BJ (cell line): ENCODE measurements at regions of chr3 and their contacts with region 1.

Region 1: GRCh38 chr3:39499651-39500240 is 32.3 kb downstream of the MOBP start:
- DNase-seq: no peak
- H3K4me3 ChIP-seq: no peak overlapping the region
- H3K27me3 ChIP-seq: peaks cover 22% of the 10 kb centered on the region
- CTCF ChIP-seq: no peak

Region 2: GRCh38 chr3:39267631-39268548 is 231.9 kb before region 1 on chr3:
- CTCF ChIA-PET with region 1: no interaction called
- POLR2A ChIA-PET with region 1: no interaction called
- DNase-seq: no peak
- H3K4me3 ChIP-seq: no peak overlapping the region
- H3K27me3 ChIP-seq: peaks cover 16% of the 10 kb centered on the region
- CTCF ChIP-seq: no peak

Region 3: GRCh38 chr3:39414421-39414907 is 85.3 kb before region 1 on chr3:
- CTCF ChIA-PET with region 1: interaction called, 17 read pairs
- POLR2A ChIA-PET with region 1: no interaction called
- DNase-seq: no peak
- H3K4me3 ChIP-seq: no peak overlapping the region
- H3K27me3 ChIP-seq: no peaks in the 10 kb centered on the region
- CTCF ChIP-seq: no peak

Region 4: DNA sequence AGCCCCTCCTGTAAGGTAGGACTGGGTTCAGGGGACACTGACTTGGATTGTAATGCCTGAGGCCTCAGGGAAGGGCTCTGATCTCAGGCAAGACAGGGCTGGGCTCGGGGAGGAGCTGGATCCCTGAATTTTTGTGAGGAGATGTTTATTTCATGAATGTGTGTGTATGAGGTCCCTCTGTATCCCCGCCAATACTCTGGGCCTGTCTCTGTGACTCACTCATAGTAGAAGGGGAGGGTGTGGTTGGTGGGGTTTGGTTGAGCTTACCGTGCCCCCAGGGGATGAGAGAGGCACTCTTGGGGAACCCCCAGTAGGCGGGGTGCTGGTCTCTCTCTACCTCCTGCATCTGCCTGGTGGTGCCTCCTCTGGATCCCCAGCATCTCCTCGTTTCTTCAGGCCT is 65.2 kb before region 1 on chr3:
- CTCF ChIA-PET with region 1: interaction called, 6 read pairs
- POLR2A ChIA-PET with region 1: interaction called, 10 read pairs
- DNase-seq: no peak
- H3K4me3 ChIP-seq: no peak overlapping the region
- H3K27me3 ChIP-seq: no peaks in the 10 kb centered on the region
- CTCF ChIP-seq: no peak

Region 5: GRCh38 chr3:39447637-39448483 is 51.9 kb before region 1 on chr3:
- CTCF ChIA-PET with region 1: interaction called, 75 read pairs
- POLR2A ChIA-PET with region 1: no interaction called
- DNase-seq: peak; percentile 37
- H3K4me3 ChIP-seq: no peak overlapping the region
- H3K27me3 ChIP-seq: peaks cover 2% of the 10 kb centered on the region; the same call in 1 of the 2 replicates
- CTCF ChIP-seq: peak; percentile 90

Region 6: DNA sequence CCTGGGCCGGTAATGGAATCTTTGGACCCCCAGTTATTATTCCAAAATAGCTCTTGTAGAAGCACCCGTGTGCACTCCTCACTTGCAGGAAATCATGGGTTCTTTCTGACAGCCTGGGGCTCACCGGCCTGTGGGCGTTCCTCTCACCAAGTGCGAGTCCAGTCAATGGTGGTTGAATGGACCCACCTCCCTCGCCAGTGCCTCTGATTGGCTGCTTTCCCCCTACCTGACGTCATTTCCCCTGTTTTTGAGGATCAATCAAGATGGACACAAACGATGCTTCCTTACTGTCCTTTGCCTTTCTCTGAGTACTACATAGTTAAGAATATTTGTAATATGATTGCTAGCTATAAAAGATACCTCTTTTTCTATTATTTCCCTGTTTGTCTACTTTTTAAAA is 14.2 kb before region 1 on chr3:
- CTCF ChIA-PET with region 1: interaction called, 15 read pairs
- POLR2A ChIA-PET with region 1: no interaction called
- DNase-seq: no peak
- H3K4me3 ChIP-seq: no peak overlapping the region
- H3K27me3 ChIP-seq: no peaks in the 10 kb centered on the region
- CTCF ChIP-seq: no peak